Activated naive CD4-positive, alpha-beta T cell treated with anti-CD3 and anti-CD28 coated beads for 36 hours (primary cell): ENCODE measurements at regions of chr16 and their contacts with region 1.

Region 1: DNA sequence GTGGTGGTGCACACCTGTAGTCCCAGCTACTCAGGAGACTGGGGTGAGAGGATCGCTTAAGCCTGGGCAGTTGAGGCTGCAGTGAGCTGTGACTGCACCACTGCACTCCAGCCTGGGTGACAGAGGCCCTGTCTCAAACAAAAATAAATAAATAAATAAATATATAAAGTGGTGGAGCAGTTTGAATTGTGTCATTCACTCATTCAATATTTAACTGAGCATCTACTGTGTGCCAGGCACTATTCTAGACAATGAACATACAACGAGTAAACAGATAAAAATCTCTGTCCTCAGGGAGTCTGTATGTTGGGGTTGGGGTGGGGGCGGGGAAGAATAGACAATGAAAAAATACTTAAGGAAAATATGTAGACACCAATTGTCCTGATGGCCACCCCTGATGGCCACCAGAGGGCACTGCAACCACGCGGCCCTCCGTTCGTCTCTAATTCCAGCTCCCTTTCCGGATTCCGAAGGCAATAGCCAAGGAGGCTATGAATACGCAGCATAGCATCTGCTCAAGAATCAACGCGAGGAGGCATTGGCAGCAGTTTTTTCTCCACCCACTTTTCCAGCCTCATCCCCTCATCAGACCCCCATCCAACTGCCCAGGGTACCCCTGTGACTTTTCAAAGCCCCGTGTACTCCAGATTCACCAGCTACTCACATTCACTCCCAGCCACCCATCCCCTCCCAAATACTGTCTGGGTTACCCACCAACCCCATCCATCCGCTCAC is 21.4 kb downstream of the QPRT start:
- DNase-seq: peak; percentile 84
- H3K4me3 Mint-ChIP-seq: no peak overlapping the region
- H3K27ac Mint-ChIP-seq: peak overlapping the region; percentile 13
- H3K4me1 Mint-ChIP-seq: peaks cover 29% of the 10 kb centered on the region
- H3K27me3 Mint-ChIP-seq: no peaks in the 10 kb centered on the region

Region 2: DNA sequence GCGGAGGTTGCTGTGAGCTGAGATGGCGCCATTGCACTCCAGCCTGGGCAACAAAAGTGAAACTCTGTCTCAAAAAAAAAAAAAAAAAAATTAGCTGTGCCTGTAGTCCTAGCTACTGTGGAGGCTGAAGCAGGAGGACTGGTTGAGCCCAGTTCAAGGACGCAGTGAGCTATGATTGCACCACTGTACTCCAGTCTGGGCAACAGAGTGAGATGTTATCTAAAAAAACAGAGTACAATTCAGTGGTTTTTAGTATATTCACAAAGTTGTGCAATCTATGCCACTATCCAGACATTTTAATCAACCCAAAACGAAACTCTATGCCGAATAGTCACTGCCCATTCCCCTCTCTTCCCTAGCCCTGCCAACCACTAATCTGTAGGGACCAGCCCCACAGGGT is 20.3 kb after region 1 on chr16:
- CTCF ChIA-PET with region 1: interaction called, 20 read pairs
- intact Hi-C with region 1: loop called (anchors 1 kb)
- DNase-seq: no peak
- H3K4me3 Mint-ChIP-seq: no peak overlapping the region
- H3K27ac Mint-ChIP-seq: no peak overlapping the region
- H3K4me1 Mint-ChIP-seq: peaks cover 22% of the 10 kb centered on the region
- H3K27me3 Mint-ChIP-seq: no peaks in the 10 kb centered on the region

Region 3: DNA sequence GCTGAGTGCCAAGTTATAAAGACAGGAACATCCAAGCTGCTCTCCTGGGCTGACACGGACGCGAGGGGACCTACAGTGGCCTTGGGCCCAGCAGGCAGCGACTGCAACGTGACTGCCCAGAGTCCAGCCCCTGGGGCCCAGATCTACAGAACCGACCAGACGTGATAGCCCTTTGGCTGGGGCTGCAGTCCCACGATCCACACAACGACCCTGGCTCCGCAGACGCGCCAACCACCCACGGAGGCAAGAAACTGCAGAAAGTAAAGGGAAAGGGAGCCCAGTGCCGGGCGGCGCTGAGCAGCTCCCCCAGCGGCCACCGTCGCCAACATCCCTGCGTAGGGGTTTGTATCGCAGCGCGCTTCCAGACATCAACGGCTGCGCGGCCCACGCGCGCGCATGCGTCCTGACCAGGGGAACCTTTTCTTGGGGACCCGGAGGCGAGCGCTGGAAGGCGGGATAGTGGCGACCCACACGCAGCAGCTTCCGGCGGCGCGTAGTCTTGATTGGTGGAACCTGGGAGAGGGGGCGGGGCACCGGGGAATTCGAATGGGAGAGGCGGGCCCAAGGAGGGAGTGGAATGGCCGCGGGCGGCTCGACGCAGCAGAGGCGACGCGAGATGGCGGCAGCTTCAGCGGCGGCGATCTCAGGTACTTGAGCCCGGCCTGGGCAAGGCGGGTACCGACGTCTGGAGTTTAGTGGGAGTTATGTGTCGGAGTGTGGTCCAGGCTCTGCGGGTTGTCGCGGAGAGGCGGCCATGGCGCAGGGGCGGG is 89.9 kb after region 1 on chr16 and contains the start of gene KIF22:
- CTCF ChIA-PET with region 1: interaction called, 35 read pairs
- intact Hi-C with region 1: loop called (anchors 1 kb)
- DNase-seq: peak; percentile 100
- H3K4me3 Mint-ChIP-seq: peak within 1 kb of the TSS; percentile 100
- H3K27ac Mint-ChIP-seq: peak within 1 kb of the TSS; percentile 98
- H3K4me1 Mint-ChIP-seq: peaks cover 35% of the 10 kb centered on the region
- H3K27me3 Mint-ChIP-seq: no peaks in the 10 kb centered on the region
- total RNA-seq, gene KIF22: 201 to 209 TPM

Region 4: DNA sequence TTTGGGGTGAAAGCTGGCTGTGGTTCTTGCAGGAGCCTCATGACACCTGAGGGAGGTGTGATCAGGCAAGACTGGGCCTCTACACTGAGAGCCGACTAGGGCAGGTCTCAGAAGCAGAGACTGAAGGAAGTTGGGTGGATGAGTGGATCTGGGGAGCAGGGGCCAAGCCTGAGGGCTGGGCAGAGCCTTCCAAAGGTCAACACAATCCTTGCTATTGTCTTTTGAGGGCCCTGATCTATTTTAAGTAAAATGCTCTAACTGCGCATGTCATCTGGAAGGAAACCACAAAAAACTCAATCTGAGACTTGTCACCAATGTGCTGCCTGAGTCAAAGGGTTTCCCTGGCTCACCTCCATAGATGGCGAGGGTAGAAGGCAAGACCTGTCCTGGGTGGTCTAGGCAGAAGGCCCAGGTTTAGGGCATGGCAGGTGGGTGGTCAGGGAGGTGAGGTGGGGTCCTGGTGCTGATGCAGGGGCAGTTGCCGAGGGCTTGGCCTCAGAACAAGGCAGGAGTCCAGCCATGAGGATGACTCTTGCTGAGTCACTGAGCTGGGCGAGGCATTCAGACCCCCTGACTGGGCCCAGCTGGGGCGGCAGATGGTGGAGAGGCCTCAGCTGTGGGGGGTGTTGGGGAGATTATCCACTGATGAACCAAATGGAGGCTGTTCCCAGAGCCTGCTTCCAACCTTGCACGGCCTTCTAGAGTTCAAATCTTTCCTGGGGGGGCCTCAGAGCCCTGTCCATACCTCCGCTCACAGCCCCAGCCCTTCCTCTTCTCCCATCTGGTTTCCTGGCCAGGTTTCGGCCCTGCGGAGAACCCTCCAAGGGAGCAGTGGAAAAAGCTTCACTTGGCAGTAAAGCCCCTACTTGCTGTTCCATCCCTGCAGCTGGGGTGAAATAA is 125.0 kb after region 1 on chr16:
- CTCF ChIA-PET with region 1: interaction called, 13 read pairs
- intact Hi-C with region 1: no loop called
- DNase-seq: peak; percentile 78
- H3K4me3 Mint-ChIP-seq: peak overlapping the region; percentile 55
- H3K27ac Mint-ChIP-seq: peak overlapping the region; percentile 90
- H3K4me1 Mint-ChIP-seq: peaks cover 81% of the 10 kb centered on the region
- H3K27me3 Mint-ChIP-seq: no peaks in the 10 kb centered on the region

Region 5: GRCh38 chr16:30018731-30019158 is 318.3 kb after region 1 on chr16:
- CTCF ChIA-PET with region 1: interaction called, 5 read pairs
- intact Hi-C with region 1: loop called (anchors 1 kb)
- DNase-seq: no peak
- H3K4me3 Mint-ChIP-seq: no peak overlapping the region
- H3K27ac Mint-ChIP-seq: no peak overlapping the region
- H3K4me1 Mint-ChIP-seq: peaks cover 3% of the 10 kb centered on the region
- H3K27me3 Mint-ChIP-seq: no peaks in the 10 kb centered on the region